Heart right ventricle (tissue), 16 donors: ENCODE measurements at regions of chr10 and their contacts with region 1.

Region 1: GRCh38 chr10:133422821-133423771 is 1.3 kb downstream of the SPRN start:
- DNase-seq: peak in 1 of 2 donors; percentile 15
- ATAC-seq: peak in 4 of 8 donors; percentile 7 to 28 (median 24)
- H3K4me3 ChIP-seq: peak overlapping the region in 3 of 10 donors; percentile 12 to 29 (median 18)
- H3K27ac ChIP-seq: no peak overlapping the region
- H3K4me1 ChIP-seq: peaks cover 0 to 5% (median 0%) of the 10 kb centered on the region in 9 donors
- H3K27me3 ChIP-seq: peaks cover 0 to 21% (median 5%) of the 10 kb centered on the region in 7 donors
- CTCF ChIP-seq: no peak

Region 2: GRCh38 chr10:133565441-133566294 is 142.6 kb after region 1 on chr10 and contains the start of gene SYCE1:
- intact Hi-C with region 1: loop called in 1 of 10 experiments (anchors 5 kb)
- DNase-seq: peak in 1 of 2 donors; percentile 23
- ATAC-seq: peak in 3 of 8 donors; percentile 38 to 58 (median 48)
- H3K4me3 ChIP-seq: peak within 1 kb of the TSS in 1 of 10 donors; percentile 29
- H3K27ac ChIP-seq: no peak within 1 kb of the TSS
- H3K4me1 ChIP-seq: no peaks in the 10 kb centered on the region
- H3K27me3 ChIP-seq: peaks cover 0 to 40% (median 19%) of the 10 kb centered on the region in 7 donors
- CTCF ChIP-seq: no peak
- total RNA-seq, gene SYCE1: 0.16 to 1.9 (median 0.35) TPM in 6 of 10 donors, not detected in the others